MCF 10A (cell line): ENCODE measurements at regions of chr2 and their contacts with region 1.

Region 1: DNA sequence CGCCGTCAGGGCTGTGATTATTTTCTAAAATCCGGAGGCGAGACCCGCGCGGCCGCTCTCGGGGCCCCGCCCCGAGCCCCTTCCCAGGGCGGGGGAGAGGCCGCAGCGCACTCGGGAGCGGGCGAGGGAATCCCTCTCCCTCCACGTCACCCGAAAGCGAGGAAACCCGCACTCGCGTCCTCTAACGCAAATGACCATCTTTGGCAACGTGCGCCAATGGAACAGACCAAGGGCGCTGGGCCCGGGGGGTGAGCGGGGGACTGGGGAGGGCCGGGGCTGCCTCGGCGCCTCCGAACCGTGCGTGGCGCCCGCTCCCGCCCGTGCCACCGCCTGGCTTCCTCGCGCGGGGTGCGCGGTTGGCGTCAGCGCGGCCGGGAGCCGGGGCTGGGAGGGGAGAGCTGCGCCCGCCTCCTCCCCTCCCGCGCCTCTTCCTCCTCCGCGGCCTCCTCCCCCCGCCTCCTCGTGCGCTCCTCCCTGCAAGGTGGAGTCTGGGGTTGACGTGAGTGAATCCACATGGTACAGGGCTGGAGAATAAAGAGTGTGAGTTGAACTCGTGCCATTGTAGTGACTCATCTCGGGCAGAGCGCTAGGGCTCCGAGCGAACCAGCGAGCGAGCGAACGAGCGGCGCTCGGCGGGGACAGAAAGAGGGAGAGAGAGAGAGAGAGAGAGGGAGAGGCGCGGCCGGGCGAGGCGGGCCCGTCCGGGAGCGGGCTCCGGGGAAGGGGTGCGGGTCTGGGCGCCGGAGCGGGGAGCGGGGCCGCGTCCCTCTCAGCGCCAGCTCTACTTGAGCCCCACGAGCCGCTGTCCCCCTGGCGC is at the start of gene FOSL2:
- DNase-seq: peak; percentile 99
- H3K4me3 Mint-ChIP-seq: no peak within 1 kb of the TSS
- H3K27ac Mint-ChIP-seq: no peak within 1 kb of the TSS
- H3K4me1 Mint-ChIP-seq: peaks cover 18% of the 10 kb centered on the region
- H3K27me3 Mint-ChIP-seq: no peaks in the 10 kb centered on the region
- CTCF ChIP-seq: no peak
- total RNA-seq, gene FOSL2: 122 and 141 TPM in 2 replicates

Region 2: GRCh38 chr2:27723372-27724144 is 668.9 kb before region 1 on chr2:
- CTCF ChIA-PET with region 1: interaction called, 3 read pairs
- POLR2A ChIA-PET with region 1: interaction called, 11 read pairs
- intact Hi-C with region 1: no loop called
- DNase-seq: peak; percentile 75
- H3K4me3 Mint-ChIP-seq: no peak overlapping the region
- H3K27ac Mint-ChIP-seq: no peak overlapping the region
- H3K4me1 Mint-ChIP-seq: peaks cover 24% of the 10 kb centered on the region
- H3K27me3 Mint-ChIP-seq: no peaks in the 10 kb centered on the region
- CTCF ChIP-seq: peak; percentile 73

Region 3: GRCh38 chr2:27890146-27890923 is 502.2 kb before region 1 on chr2 and contains the starts of genes BABAM2 and RBKS:
- CTCF ChIA-PET with region 1: no interaction called
- POLR2A ChIA-PET with region 1: interaction called, 18 read pairs
- intact Hi-C with region 1: loop called (anchors 2 kb)
- DNase-seq: peak; percentile 83
- H3K4me3 Mint-ChIP-seq: peak within 1 kb of the TSS; percentile 99
- H3K27ac Mint-ChIP-seq: peak within 1 kb of the TSS; percentile 100
- H3K4me1 Mint-ChIP-seq: peaks cover 36% of the 10 kb centered on the region
- H3K27me3 Mint-ChIP-seq: no peaks in the 10 kb centered on the region
- CTCF ChIP-seq: no peak
- total RNA-seq, gene BABAM2: 45.1 and 57.6 TPM in 2 replicates
- total RNA-seq, gene RBKS: 9.2 and 9.9 TPM in 2 replicates

Region 4: GRCh38 chr2:28160986-28161425 is 231.5 kb before region 1 on chr2:
- CTCF ChIA-PET with region 1: interaction called, 5 read pairs
- POLR2A ChIA-PET with region 1: interaction called, 12 read pairs
- intact Hi-C with region 1: loop called (anchors 2 kb)
- DNase-seq: peak; percentile 82
- H3K4me3 Mint-ChIP-seq: no peak overlapping the region
- H3K27ac Mint-ChIP-seq: peak overlapping the region; percentile 89
- H3K4me1 Mint-ChIP-seq: peaks cover 45% of the 10 kb centered on the region
- H3K27me3 Mint-ChIP-seq: no peaks in the 10 kb centered on the region
- CTCF ChIP-seq: no peak

Region 5: GRCh38 chr2:28231110-28231631 is 161.3 kb before region 1 on chr2:
- CTCF ChIA-PET with region 1: no interaction called
- POLR2A ChIA-PET with region 1: interaction called, 117 read pairs
- intact Hi-C with region 1: no loop called
- DNase-seq: peak; percentile 9
- H3K4me3 Mint-ChIP-seq: no peak overlapping the region
- H3K27ac Mint-ChIP-seq: no peak overlapping the region
- H3K4me1 Mint-ChIP-seq: peaks cover 15% of the 10 kb centered on the region
- H3K27me3 Mint-ChIP-seq: no peaks in the 10 kb centered on the region
- CTCF ChIP-seq: no peak

Region 6: DNA sequence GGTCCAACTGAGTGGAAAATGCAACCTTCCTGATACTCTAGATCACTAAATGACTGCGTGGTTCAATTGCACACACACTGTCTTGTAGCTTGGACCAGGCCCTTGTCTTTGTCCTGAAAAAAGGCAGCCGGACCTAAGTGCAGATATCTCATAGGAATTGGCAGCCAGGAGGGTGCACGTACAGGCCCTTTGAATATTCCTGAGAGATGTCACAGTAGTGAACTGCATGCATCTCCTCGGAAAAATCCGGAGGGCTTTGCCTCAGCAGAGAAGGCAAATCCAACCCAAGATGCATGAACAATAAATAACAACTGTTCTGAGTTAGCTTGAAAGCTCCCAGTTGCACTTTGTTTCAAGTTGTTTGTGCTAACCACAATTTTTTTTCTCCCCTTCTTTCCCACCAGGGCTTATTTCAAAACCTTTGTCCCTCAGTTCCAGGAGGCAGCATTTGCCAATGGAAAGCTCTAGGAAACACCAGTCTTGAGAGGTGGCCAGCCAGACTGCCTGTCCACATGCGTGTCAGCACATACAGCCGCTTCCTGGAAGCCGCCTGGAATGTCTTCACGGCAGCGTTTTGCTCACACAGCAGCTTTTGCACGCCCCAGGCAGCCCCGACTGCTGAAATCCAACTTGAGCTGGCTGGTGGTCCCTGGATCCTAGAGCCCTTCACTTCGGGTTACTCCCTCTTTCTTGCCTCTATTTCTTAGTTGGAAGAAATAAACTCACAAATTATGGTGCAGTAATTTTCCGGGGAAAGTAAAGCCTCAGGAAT is 54.3 kb before region 1 on chr2:
- CTCF ChIA-PET with region 1: no interaction called
- POLR2A ChIA-PET with region 1: interaction called, 22 read pairs
- intact Hi-C with region 1: no loop called
- DNase-seq: peak; percentile 82
- H3K4me3 Mint-ChIP-seq: no peak overlapping the region
- H3K27ac Mint-ChIP-seq: peak overlapping the region; percentile 86
- H3K4me1 Mint-ChIP-seq: peaks cover 19% of the 10 kb centered on the region
- H3K27me3 Mint-ChIP-seq: no peaks in the 10 kb centered on the region
- CTCF ChIP-seq: no peak

Region 7: DNA sequence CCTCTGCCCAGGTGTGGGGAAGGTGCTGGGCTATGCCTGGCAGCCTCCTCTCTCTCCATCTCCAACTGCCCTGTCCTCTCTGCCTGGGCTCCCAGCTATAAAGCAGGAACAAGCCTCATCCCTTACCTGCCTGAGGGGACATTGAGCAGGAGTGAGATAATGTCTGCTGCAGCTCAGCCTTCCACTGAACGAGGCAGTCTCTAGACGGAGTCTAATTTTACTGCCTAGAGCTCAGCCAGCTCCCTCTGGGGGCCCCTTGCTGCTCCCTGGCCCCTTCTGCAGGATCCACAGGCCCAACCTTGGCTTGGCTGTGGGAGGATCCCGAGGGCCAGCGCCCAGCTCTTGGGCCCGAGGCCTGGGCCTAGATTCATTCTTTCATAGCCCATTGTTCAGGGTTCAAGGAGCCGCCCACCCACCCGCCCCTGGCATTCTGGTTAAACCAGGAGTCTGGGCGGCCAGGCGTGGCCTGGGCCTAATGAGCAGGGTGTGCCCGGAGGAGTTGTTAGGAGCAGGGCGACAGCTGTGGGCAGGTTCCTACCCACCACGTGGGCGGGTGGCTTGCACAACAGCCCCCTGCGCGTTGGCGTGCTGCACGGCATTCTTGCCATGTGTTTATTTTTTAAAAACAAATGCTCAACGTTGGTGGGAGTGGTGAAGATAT is 44.8 kb after region 1 on chr2:
- CTCF ChIA-PET with region 1: interaction called, 3 read pairs
- POLR2A ChIA-PET with region 1: interaction called, 11 read pairs
- intact Hi-C with region 1: no loop called
- DNase-seq: peak; percentile 92
- H3K4me3 Mint-ChIP-seq: peak overlapping the region; percentile 29
- H3K27ac Mint-ChIP-seq: peak overlapping the region; percentile 67
- H3K4me1 Mint-ChIP-seq: peaks cover 41% of the 10 kb centered on the region
- H3K27me3 Mint-ChIP-seq: no peaks in the 10 kb centered on the region
- CTCF ChIP-seq: no peak